Cardiac septum (tissue), 1 donor: ENCODE measurements at regions of chr9 and their contacts with region 1.

Region 1: DNA sequence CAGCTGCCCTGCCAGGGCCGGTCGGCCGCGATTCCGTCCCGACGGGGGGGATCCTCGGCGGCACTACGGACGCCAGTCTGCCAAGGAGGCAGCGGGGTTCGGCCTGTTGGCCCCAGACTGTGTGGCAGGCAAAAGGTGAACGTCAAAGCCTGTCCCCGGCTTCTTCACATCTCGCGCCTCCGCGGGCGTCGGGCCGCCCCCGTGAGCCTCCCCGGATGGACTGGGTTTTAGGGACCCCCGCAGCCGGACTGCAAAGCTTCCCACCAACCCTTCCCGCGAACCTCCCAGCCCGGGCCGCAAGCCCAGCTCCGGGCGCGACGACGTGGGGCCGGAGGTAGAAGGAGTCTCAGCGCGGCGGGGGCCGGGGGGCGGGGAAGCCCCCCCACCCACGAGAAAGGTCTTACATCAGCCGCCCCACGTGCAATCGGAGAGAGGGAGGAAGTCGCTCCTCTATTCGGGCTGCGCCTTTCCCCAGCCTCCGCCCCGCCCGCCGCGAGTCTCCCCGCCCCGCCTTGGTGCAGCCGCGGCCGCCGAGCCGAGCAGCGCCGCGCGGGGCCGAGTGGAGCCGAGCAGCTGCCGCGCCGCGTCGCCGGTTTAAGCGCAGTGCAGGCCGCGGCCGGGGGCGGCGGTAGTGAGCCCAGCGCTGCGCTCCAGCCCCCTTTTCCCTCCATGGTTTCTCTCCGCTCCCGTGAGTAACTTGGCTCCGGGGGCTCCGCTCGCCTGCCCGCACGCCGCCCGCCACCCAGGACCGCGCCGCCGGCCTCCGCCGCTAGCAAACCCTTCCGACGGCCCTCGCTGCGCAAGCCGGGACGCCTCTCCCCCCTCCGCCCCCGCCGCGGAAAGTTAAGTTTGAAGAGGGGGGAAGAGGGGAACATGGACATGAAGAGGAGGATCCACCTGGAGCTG is at the start of gene ANP32B:
- DNase-seq: peak; percentile 96
- total RNA-seq, gene ANP32B: 69.0 TPM

Region 2: DNA sequence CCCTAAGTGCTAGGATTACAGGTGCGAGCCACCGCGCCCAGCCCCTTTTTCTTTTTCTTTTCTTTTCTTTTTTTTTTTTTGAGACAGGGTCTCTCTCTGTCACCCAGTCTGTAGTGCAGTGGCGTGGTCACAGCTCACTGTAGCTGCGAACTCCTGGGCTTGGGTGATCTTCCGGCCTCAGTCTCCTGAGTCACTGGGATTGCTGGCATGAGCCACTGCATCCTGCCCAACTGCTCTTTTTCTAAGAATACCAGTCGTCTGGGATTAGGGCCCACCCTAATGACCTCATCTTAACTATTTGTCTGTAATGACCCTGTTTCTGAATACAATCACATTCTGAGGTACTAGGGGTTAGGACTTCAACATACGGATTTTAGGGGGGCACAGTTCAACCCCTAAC is 39.5 kb after region 1 on chr9:
- intact Hi-C with region 1: loop called (anchors 5 kb)
- DNase-seq: no peak

Region 3: GRCh38 chr9:98034593-98035546 is 51.9 kb after region 1 on chr9:
- intact Hi-C with region 1: loop called (anchors 5 kb)
- DNase-seq: peak; percentile 87

Region 4: GRCh38 chr9:98056269-98057137 is 73.6 kb after region 1 on chr9 and contains the start of gene NANS:
- intact Hi-C with region 1: loop called (anchors 5 kb)
- DNase-seq: peak; percentile 97
- total RNA-seq, gene NANS: 26.3 TPM